Sigmoid colon (tissue), 7 donors: ENCODE measurements at regions of chr14 and their contacts with region 1.

Region 1: GRCh38 chr14:64671591-64671990 is 32.6 kb upstream of the PLEKHG3 start:
- DNase-seq: no peak
- H3K4me3 ChIP-seq: no peak overlapping the region
- H3K27ac ChIP-seq: peak overlapping the region in 1 of 4 donors; percentile 49
- H3K4me1 ChIP-seq: peaks cover 0 to 20% (median 11%) of the 10 kb centered on the region in 4 donors
- H3K27me3 ChIP-seq: peaks cover 0 to 2% (median 0%) of the 10 kb centered on the region in 3 donors
- CTCF ChIP-seq: peak; percentile 66 to 87 (median 71)
- EP300 ChIP-seq: no peak
- POLR2A ChIP-seq: no peak

Region 2: GRCh38 chr14:64159588-64159987 is 512.0 kb before region 1 on chr14:
- intact Hi-C with region 1: no loop called
- DNase-seq: no peak
- H3K4me3 ChIP-seq: no peak overlapping the region
- H3K27ac ChIP-seq: no peak overlapping the region
- H3K4me1 ChIP-seq: no peaks in the 10 kb centered on the region
- H3K27me3 ChIP-seq: no peaks in the 10 kb centered on the region
- CTCF ChIP-seq: no peak
- EP300 ChIP-seq: no peak
- POLR2A ChIP-seq: no peak

Region 3: GRCh38 chr14:64363265-64363846 is 308.2 kb before region 1 on chr14:
- intact Hi-C with region 1: no loop called
- DNase-seq: no peak
- H3K4me3 ChIP-seq: no peak overlapping the region
- H3K27ac ChIP-seq: no peak overlapping the region
- H3K4me1 ChIP-seq: no peaks in the 10 kb centered on the region
- H3K27me3 ChIP-seq: no peaks in the 10 kb centered on the region
- CTCF ChIP-seq: no peak
- EP300 ChIP-seq: no peak
- POLR2A ChIP-seq: no peak

Region 4: GRCh38 chr14:64745511-64746091 is 74.0 kb after region 1 on chr14:
- intact Hi-C with region 1: loop called (anchors 5 kb)
- DNase-seq: no peak
- H3K4me3 ChIP-seq: no peak overlapping the region
- H3K27ac ChIP-seq: peak overlapping the region; percentile 38 to 72 (median 62)
- H3K4me1 ChIP-seq: peaks cover 0 to 24% (median 21%) of the 10 kb centered on the region in 4 donors
- H3K27me3 ChIP-seq: no peaks in the 10 kb centered on the region
- CTCF ChIP-seq: peak; percentile 8 to 35 (median 24)
- EP300 ChIP-seq: no peak
- POLR2A ChIP-seq: no peak

Region 5: GRCh38 chr14:64764641-64765520 is 93.3 kb after region 1 on chr14:
- intact Hi-C with region 1: loop called (anchors 1 kb)
- DNase-seq: peak; percentile 85
- H3K4me3 ChIP-seq: peak overlapping the region in 3 of 4 donors; percentile 30 to 42 (median 34)
- H3K27ac ChIP-seq: peak overlapping the region in 3 of 4 donors; percentile 67 to 86 (median 78)
- H3K4me1 ChIP-seq: peaks cover 0 to 52% (median 44%) of the 10 kb centered on the region in 4 donors
- H3K27me3 ChIP-seq: no peaks in the 10 kb centered on the region
- CTCF ChIP-seq: peak; percentile 92 to 96 (median 94)
- EP300 ChIP-seq: no peak
- POLR2A ChIP-seq: no peak

Region 6: DNA sequence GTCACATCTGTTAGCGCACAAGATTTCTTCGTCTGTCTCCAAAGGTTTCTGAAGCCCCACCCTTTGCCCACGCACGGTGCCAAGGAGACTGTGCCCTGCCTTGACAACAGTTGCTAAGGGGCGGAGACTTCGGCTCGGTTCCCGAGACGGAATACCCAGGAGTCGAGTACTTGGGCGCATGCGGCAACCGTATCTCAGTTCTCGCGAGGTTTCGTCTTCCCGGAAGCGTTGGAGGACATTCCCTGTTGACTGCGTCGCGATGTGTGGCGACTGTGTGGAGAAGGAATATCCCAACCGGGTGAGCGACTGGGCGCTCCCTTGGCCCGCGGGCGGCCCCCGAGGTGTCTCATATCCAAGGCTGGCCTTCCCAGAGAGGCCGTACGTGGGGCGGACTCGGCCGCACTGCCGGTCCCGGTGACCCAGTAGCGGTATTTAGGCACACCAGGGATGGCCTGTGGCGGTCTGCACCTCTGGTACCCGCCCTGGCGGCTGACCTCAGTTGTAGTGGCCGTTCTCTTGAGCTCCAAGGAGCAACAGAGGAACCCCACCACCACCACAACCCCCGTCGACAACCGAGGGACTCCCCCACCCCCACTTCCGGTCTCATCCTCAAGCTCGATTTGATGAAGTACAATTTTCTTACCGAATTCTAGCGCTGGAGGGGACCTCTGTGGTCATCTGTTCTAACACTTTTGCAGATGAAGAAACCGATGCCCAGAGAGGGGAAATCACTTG is 242.8 kb after region 1 on chr14 and contains the start of gene CHURC1:
- intact Hi-C with region 1: loop called (anchors 10 kb)
- DNase-seq: peak; percentile 99
- H3K4me3 ChIP-seq: peak within 1 kb of the TSS; percentile 65 to 94 (median 92)
- H3K27ac ChIP-seq: peak within 1 kb of the TSS; percentile 86 to 98 (median 94)
- H3K4me1 ChIP-seq: peaks cover 0 to 38% (median 30%) of the 10 kb centered on the region in 4 donors
- H3K27me3 ChIP-seq: no peaks in the 10 kb centered on the region
- CTCF ChIP-seq: no peak
- EP300 ChIP-seq: no peak
- POLR2A ChIP-seq: peak; percentile 71 to 84
- total RNA-seq, gene CHURC1: 110 to 161 (median 142) TPM